PC-9 (cell line): ENCODE measurements at regions of chr17 and their contacts with region 1.

Region 1: DNA sequence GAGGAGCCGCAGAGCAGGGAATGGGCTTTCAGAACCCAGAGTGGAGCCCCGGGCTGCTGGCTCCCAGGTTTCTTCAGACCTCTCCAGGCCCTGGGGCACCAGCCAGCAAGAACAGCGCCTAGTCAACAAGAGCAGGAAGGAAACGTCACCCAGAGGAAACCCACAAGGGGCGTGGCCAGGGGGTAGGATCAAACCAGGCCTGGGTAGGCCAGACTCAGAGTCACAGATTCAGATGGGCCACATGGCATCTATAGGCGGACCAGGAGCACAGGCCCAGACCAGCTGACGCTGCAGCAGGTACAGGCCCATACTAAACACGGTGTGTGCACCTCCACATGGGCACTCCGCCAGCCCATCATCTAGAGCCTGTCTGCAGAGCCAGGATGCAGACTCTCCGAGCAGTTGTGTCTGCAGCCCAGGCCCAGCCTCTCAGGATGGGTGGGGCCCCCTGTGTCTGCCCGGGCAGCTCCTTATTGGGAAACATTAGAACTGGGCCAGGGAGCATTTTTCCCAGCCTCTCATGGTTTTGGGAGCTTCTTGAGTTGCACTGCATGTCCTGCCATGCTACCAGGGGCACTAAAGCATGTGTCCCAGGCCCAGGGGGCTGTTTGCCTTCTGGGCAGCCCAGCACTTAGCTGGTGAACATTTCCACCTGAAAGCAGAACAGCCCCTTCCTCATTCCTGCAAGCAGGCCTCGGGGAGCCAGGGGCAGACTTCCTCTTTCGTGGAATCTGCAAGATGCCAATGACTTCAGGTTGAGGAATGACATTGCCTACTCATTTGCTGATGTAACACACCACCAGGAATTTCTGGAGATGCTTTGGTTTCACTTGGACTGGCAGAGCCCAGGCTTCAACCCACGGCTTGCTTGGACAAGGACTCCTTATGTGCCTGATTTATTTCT is at the start of gene NLRP1:
- DNase-seq: peak; percentile 41 to 53
- H3K4me3 ChIP-seq: no peak within 1 kb of the TSS
- H3K27ac ChIP-seq: peak within 1 kb of the TSS; percentile 45; the same call in 1 of the 2 replicates
- H3K4me1 ChIP-seq: peaks cover 15% of the 10 kb centered on the region; the same call in 1 of the 2 replicates
- H3K27me3 ChIP-seq: no peaks in the 10 kb centered on the region
- CTCF ChIP-seq: no peak
- total RNA-seq, gene NLRP1: 0.63 and 0.75 TPM in 2 replicates

Region 2: GRCh38 chr17:5706577-5707216 is 122.1 kb after region 1 on chr17:
- CTCF ChIA-PET with region 1: no interaction called
- POLR2A ChIA-PET with region 1: no interaction called
- intact Hi-C with region 1: loop called (anchors 5 kb)
- DNase-seq: peak in 1 of 2 experiments; percentile 26
- H3K4me3 ChIP-seq: no peak overlapping the region
- H3K27ac ChIP-seq: no peak overlapping the region
- H3K4me1 ChIP-seq: no peaks in the 10 kb centered on the region
- H3K27me3 ChIP-seq: peaks cover 43% of the 10 kb centered on the region
- CTCF ChIP-seq: peak; percentile 78

Region 3: GRCh38 chr17:6279659-6280058 is 695.0 kb after region 1 on chr17:
- CTCF ChIA-PET with region 1: no interaction called
- POLR2A ChIA-PET with region 1: no interaction called
- intact Hi-C with region 1: loop called (anchors 1 kb)
- DNase-seq: peak; percentile 37 to 42
- H3K4me3 ChIP-seq: no peak overlapping the region
- H3K27ac ChIP-seq: no peak overlapping the region
- H3K4me1 ChIP-seq: no peaks in the 10 kb centered on the region
- H3K27me3 ChIP-seq: peaks cover 24% of the 10 kb centered on the region
- CTCF ChIP-seq: peak; percentile 50

Region 4: GRCh38 chr17:6421700-6422604 is 837.3 kb after region 1 on chr17:
- CTCF ChIA-PET with region 1: interaction called, 3 read pairs
- POLR2A ChIA-PET with region 1: no interaction called
- intact Hi-C with region 1: loop called (anchors 1 kb)
- DNase-seq: peak; percentile 58 to 83
- H3K4me3 ChIP-seq: no peak overlapping the region
- H3K27ac ChIP-seq: no peak overlapping the region
- H3K4me1 ChIP-seq: no peaks in the 10 kb centered on the region
- H3K27me3 ChIP-seq: peaks cover 84% of the 10 kb centered on the region
- CTCF ChIP-seq: peak; percentile 95

Region 5: GRCh38 chr17:6648181-6648580 is 1063.5 kb after region 1 on chr17:
- CTCF ChIA-PET with region 1: no interaction called
- POLR2A ChIA-PET with region 1: no interaction called
- intact Hi-C with region 1: loop called (anchors 5 kb)
- DNase-seq: no peak
- H3K4me3 ChIP-seq: no peak overlapping the region
- H3K27ac ChIP-seq: no peak overlapping the region
- H3K4me1 ChIP-seq: peaks cover 37% of the 10 kb centered on the region
- H3K27me3 ChIP-seq: no peaks in the 10 kb centered on the region
- CTCF ChIP-seq: peak; percentile 38; the same call in 1 of the 2 replicates